ENCODE measurements at regions of chr11 and their contacts with region 1.

Region 1: DNA sequence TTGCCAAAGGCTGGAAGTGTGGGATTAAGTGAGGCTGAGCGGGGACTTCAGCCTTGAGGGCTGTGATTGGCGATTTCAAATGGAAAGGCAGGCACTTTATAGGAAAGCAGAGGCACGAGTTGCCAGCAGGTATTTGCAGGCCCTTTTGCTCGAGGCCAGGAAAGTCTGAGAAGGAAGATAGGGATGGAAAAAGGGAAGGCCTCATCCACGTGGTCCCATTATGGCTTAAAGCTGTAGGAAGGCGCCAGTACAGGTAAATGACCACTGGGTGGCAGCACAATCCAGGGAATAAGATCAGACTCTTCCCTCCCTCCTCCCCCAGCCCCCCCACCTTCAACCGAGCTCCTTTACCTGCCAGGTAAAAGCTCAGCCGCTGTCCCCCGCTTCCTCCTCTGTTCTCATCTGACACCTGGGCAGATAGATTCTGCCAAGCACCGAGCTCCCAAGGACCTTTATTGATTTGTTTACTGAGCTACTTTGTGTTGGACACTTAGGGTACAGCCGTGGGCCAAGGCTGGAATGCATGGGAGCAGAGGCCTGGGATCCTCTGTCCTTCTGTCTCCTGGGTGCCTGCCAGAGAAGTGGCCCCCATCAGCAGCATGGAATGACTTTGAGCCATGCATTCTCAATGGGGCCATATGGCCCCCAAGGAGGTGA is 7.5 kb downstream of the P2RX3 start:
- DNase-seq: peak; percentile 75 to 84 (median 79)
- ATAC-seq: peak; percentile 85 to 96 (median 92)
- H3K4me3 ChIP-seq: no peak overlapping the region
- H3K27ac ChIP-seq: no peak overlapping the region
- H3K4me1 ChIP-seq: peaks cover 0 to 5% (median 5%) of the 10 kb centered on the region in 3 donors
- H3K27me3 ChIP-seq: no peaks in the 10 kb centered on the region
- CTCF ChIP-seq: peak; percentile 79 to 83 (median 80)

Region 2: DNA sequence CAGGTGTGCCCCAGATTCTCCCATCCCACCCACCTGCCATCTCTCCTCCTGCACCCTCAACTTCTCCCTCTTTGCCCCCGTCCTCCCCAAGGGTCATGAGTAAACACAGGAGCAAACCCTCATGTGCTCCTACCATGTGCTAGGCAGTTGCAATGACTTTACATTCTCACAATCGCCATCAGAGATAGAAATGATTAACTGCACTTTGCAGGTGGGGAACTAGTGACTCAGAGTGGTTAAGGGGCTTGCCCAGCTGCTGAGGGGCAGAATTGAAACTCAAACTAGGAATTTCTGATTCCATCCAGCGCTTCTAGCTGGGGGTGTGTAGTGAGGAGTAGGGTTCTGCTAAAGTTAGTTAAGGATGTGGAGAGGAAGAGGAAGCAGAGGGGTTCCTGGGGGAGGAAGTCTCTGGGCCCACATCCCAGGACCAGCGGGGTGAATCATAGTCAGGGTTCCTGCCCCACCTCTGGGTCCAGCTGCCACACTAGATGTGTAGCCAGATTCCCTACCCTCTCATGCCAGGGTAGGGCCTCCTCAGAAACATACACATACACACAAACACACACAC is 60.7 kb after region 1 on chr11:
- intact Hi-C with region 1: loop called in 1 of 3 experiments (anchors 10 kb)
- DNase-seq: no peak
- ATAC-seq: peak in 2 of 4 donors; percentile 40 to 57
- H3K4me3 ChIP-seq: no peak overlapping the region
- H3K27ac ChIP-seq: no peak overlapping the region
- H3K4me1 ChIP-seq: peaks cover 0 to 6% (median 0%) of the 10 kb centered on the region in 3 donors
- H3K27me3 ChIP-seq: no peaks in the 10 kb centered on the region
- CTCF ChIP-seq: no peak

Region 3: GRCh38 chr11:57456960-57457642 is 111.4 kb after region 1 on chr11:
- intact Hi-C with region 1: loop called in 1 of 3 experiments (anchors 10 kb)
- DNase-seq: peak; percentile 74 to 95 (median 88)
- ATAC-seq: peak; percentile 67 to 91 (median 79)
- H3K4me3 ChIP-seq: no peak overlapping the region
- H3K27ac ChIP-seq: no peak overlapping the region
- H3K4me1 ChIP-seq: peaks cover 4 to 24% (median 17%) of the 10 kb centered on the region in 3 donors
- H3K27me3 ChIP-seq: no peaks in the 10 kb centered on the region
- CTCF ChIP-seq: peak; percentile 94 to 98 (median 96)

Region 4: DNA sequence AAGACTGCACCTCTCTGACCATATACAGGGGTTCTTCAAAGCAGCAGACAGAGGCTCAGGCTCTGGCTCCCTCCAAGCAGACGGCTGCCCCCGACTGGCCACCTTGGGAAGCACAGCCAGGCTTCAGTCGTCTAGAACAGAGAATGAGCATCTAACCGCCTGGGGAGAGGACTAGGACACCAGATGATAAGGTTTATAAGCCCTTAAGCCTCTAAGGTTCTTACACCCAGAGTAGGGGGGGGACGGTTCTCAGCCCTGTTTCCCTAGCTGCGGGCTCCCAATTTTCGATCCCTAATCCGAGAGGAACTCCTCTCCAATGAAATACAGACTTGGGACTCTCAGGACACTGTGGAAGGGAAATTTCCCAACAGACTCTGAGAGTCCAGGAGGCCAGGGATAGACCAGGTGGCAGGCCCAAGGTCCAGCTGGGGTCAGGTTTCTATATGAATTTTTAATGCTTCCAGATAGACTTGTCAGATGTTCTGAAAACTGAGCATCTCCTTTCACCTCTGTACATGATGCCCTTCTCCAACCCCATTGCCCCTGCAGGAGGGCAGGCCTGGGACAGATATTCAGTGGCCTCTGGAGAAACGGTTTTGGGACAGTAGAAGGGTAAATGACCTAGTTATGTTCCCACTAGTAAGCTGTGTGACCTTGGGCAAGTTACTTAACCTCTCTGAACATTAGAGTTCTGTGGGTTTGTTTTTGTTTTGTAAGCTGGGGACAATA is 134.9 kb after region 1 on chr11:
- intact Hi-C with region 1: loop called in 1 of 3 experiments (anchors 10 kb)
- DNase-seq: peak; percentile 57 to 88 (median 76)
- ATAC-seq: peak; percentile 22 to 40 (median 33)
- H3K4me3 ChIP-seq: no peak overlapping the region
- H3K27ac ChIP-seq: no peak overlapping the region
- H3K4me1 ChIP-seq: peaks cover 14 to 19% (median 17%) of the 10 kb centered on the region in 3 donors
- H3K27me3 ChIP-seq: no peaks in the 10 kb centered on the region
- CTCF ChIP-seq: peak; percentile 17 to 63 (median 50)

Region 5: GRCh38 chr11:57527056-57527631 is 181.5 kb after region 1 on chr11:
- intact Hi-C with region 1: loop called in 1 of 3 experiments (anchors 5 kb)
- DNase-seq: peak; percentile 67 to 88 (median 76)
- ATAC-seq: peak; percentile 34 to 54 (median 52)
- H3K4me3 ChIP-seq: no peak overlapping the region
- H3K27ac ChIP-seq: no peak overlapping the region
- H3K4me1 ChIP-seq: peaks cover 0 to 21% (median 0%) of the 10 kb centered on the region in 3 donors
- H3K27me3 ChIP-seq: no peaks in the 10 kb centered on the region
- CTCF ChIP-seq: peak; percentile 78 to 91 (median 86)

Region 6: DNA sequence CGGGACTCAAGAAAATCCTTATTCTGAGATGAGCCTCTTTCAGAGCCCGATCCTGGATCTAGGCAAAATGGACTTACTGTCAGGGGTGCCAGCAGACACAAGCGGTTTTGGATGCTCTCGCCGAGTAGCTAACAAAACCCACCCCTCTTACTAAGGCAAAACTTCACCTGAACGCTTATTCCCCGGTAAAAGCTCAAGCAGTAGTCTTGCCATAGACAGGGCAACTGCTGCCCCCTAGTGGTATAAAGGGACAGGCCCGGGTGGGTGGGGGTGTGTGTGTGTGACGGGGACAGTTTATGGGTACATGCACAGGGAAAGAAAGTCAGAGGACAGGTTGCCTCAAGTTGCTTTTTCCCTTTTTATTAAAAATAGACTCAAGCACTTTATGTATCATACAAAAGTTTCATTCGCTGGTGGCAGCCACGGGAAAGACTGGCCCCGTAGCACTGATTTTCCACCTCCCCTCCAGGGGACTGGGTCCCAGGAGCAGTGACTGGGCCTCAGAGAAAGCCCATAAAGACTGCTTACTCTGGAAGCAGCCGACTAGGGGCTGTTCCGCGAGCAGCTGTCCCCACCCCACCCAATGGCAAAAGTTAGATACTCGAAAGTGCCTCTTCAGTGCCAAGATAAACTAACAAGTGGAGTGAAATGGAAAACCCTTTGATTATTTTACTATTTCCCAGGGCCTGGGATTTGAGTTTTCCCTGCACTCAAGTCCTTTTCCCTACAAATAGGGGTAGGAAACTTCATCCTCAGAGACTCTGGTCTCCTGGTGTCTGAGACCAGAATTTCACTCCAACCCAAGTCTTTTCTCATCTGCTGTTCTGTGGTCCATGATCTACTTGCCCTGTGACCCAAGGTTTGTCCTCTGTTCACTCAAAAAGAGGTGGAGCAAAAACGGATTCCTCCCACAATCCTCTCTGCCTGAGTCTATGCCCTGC is 299.3 kb after region 1 on chr11:
- intact Hi-C with region 1: loop called in 2 of 3 experiments (anchors 5 to 10 kb)
- DNase-seq: peak; percentile 73 to 90 (median 85)
- ATAC-seq: peak; percentile 81 to 89 (median 85)
- H3K4me3 ChIP-seq: no peak overlapping the region
- H3K27ac ChIP-seq: no peak overlapping the region
- H3K4me1 ChIP-seq: peaks cover 0 to 4% (median 4%) of the 10 kb centered on the region in 3 donors
- H3K27me3 ChIP-seq: peaks cover 0 to 2% (median 0%) of the 10 kb centered on the region in 4 donors
- CTCF ChIP-seq: peak; percentile 85 to 91 (median 88)